GM12878 (cell line): ENCODE measurements at regions of chr2 and their contacts with region 1.

Region 1: DNA sequence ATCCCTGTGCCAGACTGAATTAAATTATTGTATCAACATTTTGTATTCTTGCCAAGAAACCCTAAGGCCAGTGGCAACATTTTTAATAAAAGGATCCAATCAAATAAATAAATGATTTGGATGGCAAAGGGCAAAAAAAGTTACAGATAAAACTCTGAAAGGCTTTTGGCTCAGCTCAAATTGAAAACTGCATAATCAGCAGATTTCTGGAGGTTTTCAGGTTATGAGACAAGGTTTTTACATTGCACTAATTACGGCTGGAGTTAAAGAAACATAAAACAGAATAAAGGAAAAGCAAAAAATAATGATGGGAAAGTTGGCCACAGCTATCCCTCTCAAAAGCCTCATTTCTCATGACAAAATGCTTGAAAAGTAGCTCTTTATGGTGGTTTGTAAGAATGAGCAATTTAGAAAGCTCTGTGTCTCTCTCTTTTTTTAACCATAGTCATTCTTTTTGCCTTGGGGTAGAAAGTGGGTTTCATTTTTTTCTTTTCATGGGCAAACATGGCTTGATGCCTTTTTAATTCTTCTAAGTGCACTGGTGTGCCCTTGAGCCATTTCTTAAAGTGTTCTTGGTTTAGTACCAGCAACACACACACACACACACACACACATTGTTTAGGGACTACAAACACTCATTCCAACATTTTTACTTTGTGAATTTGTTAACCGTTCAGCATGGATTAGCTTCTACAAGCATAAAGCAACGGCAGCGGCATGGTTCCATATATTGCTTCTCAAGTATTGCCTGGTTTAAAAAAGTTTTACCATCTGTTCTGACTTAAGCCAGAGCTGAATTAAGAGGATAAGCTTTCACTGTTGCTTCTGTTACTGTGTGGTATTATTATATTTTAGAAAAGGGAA is 747.1 kb upstream of the FSHR start:
- DNase-seq: no peak
- ATAC-seq: no peak
- H3K4me3 ChIP-seq: no peak overlapping the region
- H3K27ac ChIP-seq: no peak overlapping the region
- H3K4me1 ChIP-seq: no peaks in the 10 kb centered on the region
- H3K27me3 ChIP-seq: no peaks in the 10 kb centered on the region
- CTCF ChIP-seq: no peak
- EP300 ChIP-seq: no peak
- POLR2A ChIP-seq: no peak
- RAD21 ChIP-seq: no peak

Region 2: DNA sequence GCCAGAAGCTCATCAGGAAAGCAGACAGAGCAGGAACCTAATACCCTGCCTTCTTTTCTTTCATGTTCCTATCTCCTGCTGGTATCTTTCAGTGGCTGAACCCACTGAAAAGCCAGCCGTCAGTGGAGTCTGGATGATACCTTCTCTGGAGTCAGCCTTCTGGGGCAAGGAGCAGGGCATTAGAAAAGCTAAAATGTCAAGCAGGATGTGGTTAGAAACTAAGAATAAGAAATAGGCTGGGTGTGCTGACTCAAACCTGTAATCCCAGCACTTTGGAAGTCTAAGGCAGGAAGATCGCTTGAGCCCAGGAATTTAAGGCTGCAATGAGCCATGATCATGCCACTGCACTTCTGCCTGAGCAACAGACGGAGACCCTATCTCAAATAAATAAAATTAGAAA is 105.2 kb before region 1 on chr2:
- CTCF ChIA-PET with region 1: no interaction called
- POLR2A ChIA-PET with region 1: interaction called, 10 read pairs
- RAD21 ChIA-PET with region 1: no interaction called
- SMC1A ChIA-PET with region 1: no interaction called
- in situ Hi-C with region 1: no loop called
- intact Hi-C with region 1: no loop called
- DNase-seq: no peak
- ATAC-seq: no peak
- H3K4me3 ChIP-seq: no peak overlapping the region
- H3K27ac ChIP-seq: no peak overlapping the region
- H3K4me1 ChIP-seq: no peaks in the 10 kb centered on the region
- H3K27me3 ChIP-seq: no peaks in the 10 kb centered on the region; a peak in 1 of 4 replicates
- CTCF ChIP-seq: no peak
- EP300 ChIP-seq: no peak
- POLR2A ChIP-seq: no peak
- RAD21 ChIP-seq: no peak